H1 (cell line): ENCODE measurements at regions of chr20 and their contacts with region 1.

Region 1: GRCh38 chr20:38221119-38221589 is 39.4 kb downstream of the KIAA1755 start:
- DNase-seq: peak; percentile 41 to 99
- H3K4me3 ChIP-seq: no peak overlapping the region
- H3K27ac ChIP-seq: no peak overlapping the region
- H3K4me1 ChIP-seq: peaks cover 0 to 3% (median 0%) of the 10 kb centered on the region in 4 experiments; a peak in 3 of 7 replicates
- H3K27me3 ChIP-seq: no peaks in the 10 kb centered on the region
- CTCF ChIP-seq: peak; percentile 93 to 98 (median 98)
- EP300 ChIP-seq: peak in 1 of 2 experiments; percentile 35; a peak in 1 of 3 replicates
- POLR2A ChIP-seq: no peak
- RAD21 ChIP-seq: peak; percentile 97 to 98

Region 2: GRCh38 chr20:37925265-37926165 is 295.6 kb before region 1 on chr20:
- CTCF ChIA-PET with region 1: no interaction called
- POLR2A ChIA-PET with region 1: no interaction called
- DNase-seq: no peak
- H3K4me3 ChIP-seq: no peak overlapping the region
- H3K27ac ChIP-seq: no peak overlapping the region
- H3K4me1 ChIP-seq: peaks cover 0 to 3% (median 1%) of the 10 kb centered on the region in 4 experiments; a peak in 3 of 7 replicates
- H3K27me3 ChIP-seq: no peaks in the 10 kb centered on the region
- CTCF ChIP-seq: no peak
- EP300 ChIP-seq: no peak
- POLR2A ChIP-seq: no peak
- RAD21 ChIP-seq: no peak

Region 3: DNA sequence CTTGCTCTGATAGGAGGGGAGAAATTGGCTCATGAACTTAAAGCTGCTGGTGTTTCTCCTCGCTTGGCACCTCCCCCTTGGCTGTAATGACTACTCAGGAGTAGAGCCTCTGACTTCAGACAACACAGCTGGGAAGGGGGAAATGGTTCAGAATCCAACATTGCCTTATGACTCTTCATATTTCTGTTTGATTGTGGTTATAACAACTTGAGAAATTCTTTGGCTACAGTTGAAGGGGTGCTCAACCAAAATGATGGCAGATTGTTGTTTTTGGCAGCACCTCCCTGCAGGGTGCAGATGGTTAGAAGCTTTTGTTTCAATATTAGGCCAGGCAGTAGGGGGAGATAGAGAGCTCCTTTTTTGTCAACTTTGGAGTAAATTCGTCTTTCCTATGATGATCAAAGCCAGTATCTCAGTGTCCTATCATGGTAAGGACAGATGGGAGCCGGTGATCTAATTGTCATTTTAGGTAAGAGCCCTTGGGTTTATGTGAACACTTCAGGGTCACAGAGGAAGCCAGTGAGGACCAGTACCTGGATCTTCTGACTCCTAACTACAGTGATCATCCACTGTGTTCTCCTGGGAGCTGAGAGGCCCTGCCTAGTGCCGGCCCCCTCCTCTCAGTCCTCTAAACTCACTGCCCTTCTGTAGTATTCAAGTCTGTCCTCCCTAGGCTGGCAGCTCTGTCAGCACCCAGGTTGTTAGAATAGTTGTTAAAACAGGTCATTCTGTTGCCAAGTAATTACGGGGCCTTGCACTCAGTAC is 147.7 kb before region 1 on chr20:
- CTCF ChIA-PET with region 1: interaction called, 109 read pairs
- POLR2A ChIA-PET with region 1: interaction called, 3 read pairs
- DNase-seq: peak in 1 of 2 experiments; percentile 66
- H3K4me3 ChIP-seq: no peak overlapping the region
- H3K27ac ChIP-seq: no peak overlapping the region
- H3K4me1 ChIP-seq: 0 out of 7 replicates have a peak, but pooled peaks cover 0 to 2% (median 0%) of the 10 kb centered on the region in 4 experiments
- H3K27me3 ChIP-seq: no peaks in the 10 kb centered on the region
- CTCF ChIP-seq: peak in 2 of 3 experiments; percentile 69 to 78; a peak in 3 of 4 replicates
- EP300 ChIP-seq: no peak
- POLR2A ChIP-seq: no peak
- RAD21 ChIP-seq: peak; percentile 49 to 62

Region 4: DNA sequence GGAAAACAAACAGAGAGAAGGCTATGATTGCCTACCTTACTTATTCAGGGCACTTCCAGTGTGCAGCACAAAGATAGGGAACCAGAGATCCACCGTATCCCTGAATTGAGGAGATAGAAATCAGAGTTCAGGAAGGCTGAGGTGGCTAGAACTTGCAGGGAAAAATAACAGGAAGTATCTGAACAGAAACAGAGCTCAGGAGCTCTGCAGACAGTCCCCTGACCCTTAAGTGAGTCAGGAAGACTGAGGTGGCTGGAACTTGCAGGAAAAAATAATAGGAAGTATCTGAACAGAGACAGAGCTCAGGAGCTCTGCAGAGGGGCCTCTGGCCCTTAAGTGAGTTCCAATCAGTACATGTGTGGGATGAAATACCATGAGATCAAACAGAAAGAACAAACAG is 122.2 kb before region 1 on chr20:
- CTCF ChIA-PET with region 1: interaction called, 14 read pairs
- POLR2A ChIA-PET with region 1: interaction called, 4 read pairs
- DNase-seq: no peak
- H3K4me3 ChIP-seq: no peak overlapping the region
- H3K27ac ChIP-seq: no peak overlapping the region
- H3K4me1 ChIP-seq: no peaks in the 10 kb centered on the region
- H3K27me3 ChIP-seq: no peaks in the 10 kb centered on the region
- CTCF ChIP-seq: no peak
- EP300 ChIP-seq: no peak
- POLR2A ChIP-seq: no peak
- RAD21 ChIP-seq: no peak

Region 5: GRCh38 chr20:38143646-38144554 is 77.3 kb before region 1 on chr20:
- CTCF ChIA-PET with region 1: interaction called, 21 read pairs
- POLR2A ChIA-PET with region 1: no interaction called
- DNase-seq: no peak
- H3K4me3 ChIP-seq: no peak overlapping the region
- H3K27ac ChIP-seq: no peak overlapping the region
- H3K4me1 ChIP-seq: peaks cover 0 to 8% (median 3%) of the 10 kb centered on the region in 4 experiments; a peak in 4 of 7 replicates
- H3K27me3 ChIP-seq: no peaks in the 10 kb centered on the region
- CTCF ChIP-seq: no peak
- EP300 ChIP-seq: no peak
- POLR2A ChIP-seq: no peak
- RAD21 ChIP-seq: no peak

Region 6: GRCh38 chr20:38187512-38187911 is 33.6 kb before region 1 on chr20:
- CTCF ChIA-PET with region 1: interaction called, 64 read pairs
- POLR2A ChIA-PET with region 1: no interaction called
- DNase-seq: no peak
- H3K4me3 ChIP-seq: no peak overlapping the region
- H3K27ac ChIP-seq: no peak overlapping the region
- H3K4me1 ChIP-seq: no peaks in the 10 kb centered on the region
- H3K27me3 ChIP-seq: no peaks in the 10 kb centered on the region
- CTCF ChIP-seq: peak; percentile 25 to 42 (median 38)
- EP300 ChIP-seq: no peak
- POLR2A ChIP-seq: no peak
- RAD21 ChIP-seq: peak; percentile 22 to 32

Region 7: DNA sequence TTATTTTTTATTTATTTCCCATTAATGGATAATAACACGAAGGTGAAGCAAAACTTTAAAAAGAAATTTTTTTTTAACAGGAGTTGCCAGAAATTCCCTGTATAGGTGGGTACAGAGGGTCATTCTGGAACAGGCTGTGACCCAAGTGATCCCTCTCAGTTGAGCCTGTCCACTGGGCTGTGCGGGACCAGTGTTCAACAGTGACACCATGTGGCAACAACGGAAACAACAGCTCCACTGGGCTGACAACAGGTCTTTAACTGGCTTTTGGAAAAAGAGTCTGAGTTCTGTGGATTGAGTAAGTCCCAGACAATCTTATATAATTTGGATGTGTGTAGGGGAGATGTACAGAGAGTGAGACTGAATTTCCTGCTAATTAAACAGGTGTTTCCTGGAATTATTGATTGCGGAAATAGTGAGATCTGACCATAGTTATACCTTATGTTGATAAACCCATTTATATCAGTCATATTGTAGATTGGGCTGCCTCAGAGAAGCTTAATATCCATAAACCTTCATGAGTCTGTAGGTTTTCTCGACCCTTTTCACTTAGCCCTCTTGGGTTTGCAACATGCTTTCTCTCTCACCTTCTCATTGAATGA is 21.8 kb after region 1 on chr20:
- CTCF ChIA-PET with region 1: interaction called, 28 read pairs
- POLR2A ChIA-PET with region 1: no interaction called
- DNase-seq: peak in 1 of 2 experiments; percentile 84
- H3K4me3 ChIP-seq: no peak overlapping the region
- H3K27ac ChIP-seq: no peak overlapping the region
- H3K4me1 ChIP-seq: peaks cover 0 to 4% (median 0%) of the 10 kb centered on the region in 4 experiments; a peak in 1 of 7 replicates
- H3K27me3 ChIP-seq: 0 out of 7 replicates have a peak, but pooled peaks cover 0 to 2% (median 0%) of the 10 kb centered on the region in 4 experiments
- CTCF ChIP-seq: peak; percentile 75 to 88 (median 87)
- EP300 ChIP-seq: no peak
- POLR2A ChIP-seq: no peak
- RAD21 ChIP-seq: peak; percentile 52 to 65